ENCODE measurements at regions of chr3 and their contacts with region 1.

Region 1: DNA sequence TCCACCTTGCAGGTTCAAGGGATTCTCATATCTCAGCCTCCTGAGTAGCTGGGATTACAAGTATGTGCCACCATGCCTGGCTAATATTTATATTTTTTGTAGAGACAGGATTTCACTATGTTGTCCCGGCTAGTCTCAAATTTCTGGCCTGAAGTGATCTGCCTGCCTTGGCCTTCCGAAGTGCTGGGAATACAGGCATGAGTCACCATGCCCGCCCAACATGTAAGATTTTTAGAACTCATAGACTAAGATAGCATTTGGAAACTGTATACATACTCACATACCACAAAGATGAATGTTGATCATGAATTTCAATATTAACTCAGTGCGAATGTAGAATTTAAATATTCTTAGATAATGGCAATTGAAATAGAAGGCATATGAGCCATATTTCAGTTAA is 718.9 kb downstream of the NLGN1 start:
- DNase-seq: no peak
- ATAC-seq: no peak
- H3K4me3 ChIP-seq: no peak overlapping the region
- H3K27ac ChIP-seq: no peak overlapping the region
- H3K4me1 ChIP-seq: no peaks in the 10 kb centered on the region
- H3K27me3 ChIP-seq: no peaks in the 10 kb centered on the region
- CTCF ChIP-seq: no peak

Region 2: GRCh38 chr3:173876476-173876875 is 239.9 kb before region 1 on chr3:
- intact Hi-C with region 1: no loop called
- DNase-seq: no peak
- ATAC-seq: no peak
- H3K4me3 ChIP-seq: no peak overlapping the region
- H3K27ac ChIP-seq: no peak overlapping the region
- H3K4me1 ChIP-seq: no peaks in the 10 kb centered on the region
- H3K27me3 ChIP-seq: no peaks in the 10 kb centered on the region
- CTCF ChIP-seq: no peak

Region 3: DNA sequence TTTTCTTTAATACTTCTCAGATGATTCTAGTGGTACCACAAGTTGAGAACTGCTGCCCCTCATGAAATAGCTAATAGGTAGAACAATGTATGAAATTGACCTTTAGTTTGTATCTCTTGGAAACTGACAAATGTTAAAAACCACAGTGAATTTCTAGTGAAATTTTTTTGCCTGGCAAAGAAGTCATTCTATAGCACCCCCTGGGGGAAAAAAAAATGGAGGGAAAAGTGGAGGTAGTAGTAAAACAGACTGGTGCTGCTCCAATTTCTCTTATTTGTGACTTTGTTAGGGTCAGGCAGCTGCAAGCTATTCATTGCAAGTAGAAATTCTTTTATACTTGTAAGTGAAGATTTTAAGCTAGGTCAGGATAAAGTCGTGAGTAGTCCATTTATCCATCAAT is 113.9 kb before region 1 on chr3:
- intact Hi-C with region 1: no loop called
- DNase-seq: no peak
- ATAC-seq: no peak
- H3K4me3 ChIP-seq: no peak overlapping the region
- H3K27ac ChIP-seq: no peak overlapping the region
- H3K4me1 ChIP-seq: no peaks in the 10 kb centered on the region
- H3K27me3 ChIP-seq: no peaks in the 10 kb centered on the region
- CTCF ChIP-seq: peak in 2 of 9 donors; percentile 9 to 26

Region 4: DNA sequence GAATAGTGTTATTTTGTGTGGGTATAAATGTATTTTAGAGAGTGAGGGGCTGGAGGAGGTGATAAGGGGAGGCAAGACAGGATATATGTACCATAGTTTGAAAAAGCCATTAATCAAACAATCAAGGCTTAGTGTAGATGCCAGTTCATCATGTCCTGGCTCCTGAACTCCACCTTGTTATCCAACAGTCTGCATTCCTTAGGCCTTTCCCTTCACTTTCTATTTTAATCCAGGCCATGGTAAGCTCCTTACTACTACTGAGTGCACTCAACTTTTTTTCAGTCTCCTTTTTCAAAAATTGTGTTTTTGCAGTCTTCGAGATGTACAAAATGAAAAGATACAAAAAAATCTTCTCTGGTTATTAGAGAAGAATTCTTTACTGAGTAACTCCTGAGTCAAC is 42.3 kb after region 1 on chr3:
- intact Hi-C with region 1: loop called in 1 of 10 experiments (anchors 1 kb)
- DNase-seq: no peak
- ATAC-seq: peak in 6 of 8 donors; percentile 57 to 90 (median 68)
- H3K4me3 ChIP-seq: no peak overlapping the region
- H3K27ac ChIP-seq: peak overlapping the region in 3 of 10 donors; percentile 5 to 37 (median 37)
- H3K4me1 ChIP-seq: peaks cover 0 to 7% (median 0%) of the 10 kb centered on the region in 9 donors
- H3K27me3 ChIP-seq: no peaks in the 10 kb centered on the region
- CTCF ChIP-seq: no peak

Measured in heart right ventricle (tissue), 16 donors.